MCF 10A (cell line): ENCODE measurements at regions of chr10 and their contacts with region 1.

Region 1: GRCh38 chr10:25113191-25114035 is 61.4 kb upstream of the GPR158 start:
- DNase-seq: peak; percentile 84
- H3K4me3 Mint-ChIP-seq: no peak overlapping the region
- H3K27ac Mint-ChIP-seq: no peak overlapping the region
- H3K4me1 Mint-ChIP-seq: no peaks in the 10 kb centered on the region
- H3K27me3 Mint-ChIP-seq: peaks cover 46% of the 10 kb centered on the region
- CTCF ChIP-seq: peak; percentile 66

Region 2: GRCh38 chr10:25101461-25102146 is 11.8 kb before region 1 on chr10:
- CTCF ChIA-PET with region 1: interaction called, 29 read pairs
- POLR2A ChIA-PET with region 1: interaction called, 5 read pairs
- intact Hi-C with region 1: no loop called
- DNase-seq: no peak
- H3K4me3 Mint-ChIP-seq: no peak overlapping the region
- H3K27ac Mint-ChIP-seq: no peak overlapping the region
- H3K4me1 Mint-ChIP-seq: no peaks in the 10 kb centered on the region
- H3K27me3 Mint-ChIP-seq: peaks cover 27% of the 10 kb centered on the region
- CTCF ChIP-seq: no peak

Region 3: DNA sequence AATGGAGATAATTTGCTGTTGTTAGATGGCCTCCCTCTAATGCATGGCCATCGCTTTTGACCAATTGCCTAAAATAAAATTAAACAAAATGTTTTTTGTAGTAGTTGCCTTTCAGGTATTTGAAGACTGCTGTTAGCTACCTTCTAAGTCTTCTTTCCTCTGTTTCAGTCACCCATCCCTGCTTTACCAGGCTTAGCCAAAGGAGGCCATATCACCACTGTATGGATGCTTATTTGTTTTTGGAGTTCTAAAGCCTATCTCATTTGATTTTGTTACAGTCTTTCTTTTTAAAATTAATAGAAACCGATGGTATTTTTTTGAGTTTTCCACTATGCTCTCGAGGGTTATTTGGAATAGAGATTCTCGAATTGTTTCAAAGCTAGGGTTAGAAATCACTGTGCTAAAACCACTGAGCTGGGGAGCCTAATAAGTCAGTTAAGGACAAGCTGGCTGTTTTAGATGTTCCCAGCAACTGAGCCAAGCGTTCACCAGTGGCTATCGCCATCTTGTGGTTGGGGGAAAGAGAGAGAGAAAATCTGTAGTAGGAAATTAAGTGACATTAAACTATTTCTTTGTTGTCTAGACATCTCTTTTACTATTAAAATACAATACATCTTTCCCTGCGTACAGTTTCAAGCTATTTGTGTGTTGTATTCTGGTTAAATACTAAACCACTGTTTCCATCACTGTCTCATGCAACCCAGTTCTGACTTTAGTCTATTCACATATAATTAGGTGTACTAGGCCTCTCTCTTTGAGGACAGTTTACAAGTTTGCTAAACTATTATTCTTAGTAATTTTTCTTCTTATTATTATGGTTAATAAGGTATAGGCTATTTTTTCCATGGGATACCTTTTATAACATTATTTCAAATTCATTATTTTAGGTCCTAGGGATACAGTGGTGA is 113.6 kb after region 1 on chr10:
- CTCF ChIA-PET with region 1: interaction called, 29 read pairs
- POLR2A ChIA-PET with region 1: no interaction called
- intact Hi-C with region 1: loop called (anchors 1 kb)
- DNase-seq: peak; percentile 65
- H3K4me3 Mint-ChIP-seq: no peak overlapping the region
- H3K27ac Mint-ChIP-seq: no peak overlapping the region
- H3K4me1 Mint-ChIP-seq: no peaks in the 10 kb centered on the region
- H3K27me3 Mint-ChIP-seq: peaks cover 24% of the 10 kb centered on the region
- CTCF ChIP-seq: peak; percentile 69

Region 4: DNA sequence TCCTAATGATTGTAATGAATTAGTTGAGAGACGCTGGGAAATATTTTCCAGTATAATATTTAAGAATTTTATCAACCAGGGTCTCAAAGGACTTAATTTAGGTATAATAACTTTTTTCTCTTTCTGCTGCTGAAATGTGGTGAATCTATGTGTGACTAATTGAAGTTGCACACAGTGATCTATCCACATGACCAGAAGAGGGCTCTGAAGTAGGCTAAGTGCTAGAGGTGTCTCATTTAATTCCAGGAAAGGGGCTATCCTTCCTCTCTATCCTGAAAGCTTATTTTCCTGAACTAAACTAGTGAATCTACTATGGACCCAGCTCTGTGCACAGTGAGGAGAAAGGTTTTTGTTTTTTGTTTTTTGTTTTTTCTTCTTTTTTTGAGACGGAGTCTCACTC is 526.2 kb after region 1 on chr10:
- CTCF ChIA-PET with region 1: no interaction called
- POLR2A ChIA-PET with region 1: no interaction called
- intact Hi-C with region 1: loop called (anchors 1 kb)
- DNase-seq: no peak
- H3K4me3 Mint-ChIP-seq: no peak overlapping the region
- H3K27ac Mint-ChIP-seq: no peak overlapping the region
- H3K4me1 Mint-ChIP-seq: no peaks in the 10 kb centered on the region
- H3K27me3 Mint-ChIP-seq: peaks cover 8% of the 10 kb centered on the region
- CTCF ChIP-seq: no peak

Region 5: DNA sequence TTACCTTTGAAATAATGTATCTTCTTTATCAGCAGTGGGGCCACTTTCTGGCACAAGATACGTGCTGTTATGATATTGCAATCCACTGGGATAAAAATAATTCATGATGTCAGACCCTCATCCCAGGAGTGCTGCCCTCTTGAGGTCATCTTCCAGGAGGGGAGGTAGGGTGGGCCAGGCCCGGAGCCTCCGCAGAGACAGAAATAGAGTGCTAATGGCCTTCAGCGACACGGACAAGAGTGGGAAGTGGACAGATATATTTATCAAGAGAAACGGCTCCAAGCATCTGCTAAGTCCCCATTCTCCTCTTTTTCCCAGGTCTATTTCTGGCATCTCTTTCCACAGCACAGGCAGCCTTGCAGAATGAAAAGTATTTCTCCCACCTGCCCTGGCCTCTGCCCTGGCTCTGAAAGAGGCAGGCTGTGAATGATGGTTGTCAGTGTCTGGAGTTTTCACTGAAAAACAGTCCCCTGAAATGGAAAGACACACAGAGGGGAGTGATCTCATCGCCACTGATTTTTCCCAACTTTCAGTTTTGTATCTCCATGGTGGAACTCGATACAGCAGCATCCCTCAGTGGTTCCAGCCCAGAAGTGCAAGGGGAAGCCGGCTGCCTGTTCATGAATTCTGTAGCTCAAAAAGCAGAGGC is 568.9 kb after region 1 on chr10:
- CTCF ChIA-PET with region 1: interaction called, 14 read pairs
- POLR2A ChIA-PET with region 1: no interaction called
- intact Hi-C with region 1: loop called (anchors 2 kb)
- DNase-seq: peak; percentile 25
- H3K4me3 Mint-ChIP-seq: peak overlapping the region; percentile 55
- H3K27ac Mint-ChIP-seq: no peak overlapping the region
- H3K4me1 Mint-ChIP-seq: peaks cover 11% of the 10 kb centered on the region
- H3K27me3 Mint-ChIP-seq: peaks cover 28% of the 10 kb centered on the region
- CTCF ChIP-seq: peak; percentile 36

Region 6: DNA sequence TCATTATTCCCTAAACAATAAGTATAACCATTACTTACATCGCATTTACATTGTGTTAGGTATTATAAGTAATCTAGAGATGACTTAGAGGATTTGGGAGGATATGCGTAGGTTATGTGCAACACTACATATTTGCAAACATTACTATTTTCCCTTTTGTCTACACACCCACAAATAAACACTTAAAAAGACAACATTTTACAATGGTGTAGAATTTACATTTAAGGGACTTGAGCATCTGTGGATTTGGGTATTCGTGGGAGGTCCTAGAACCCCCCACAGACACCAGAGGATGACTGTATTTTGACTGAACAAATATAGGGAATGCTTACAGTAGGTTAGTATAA is 600.5 kb after region 1 on chr10:
- CTCF ChIA-PET with region 1: interaction called, 16 read pairs
- POLR2A ChIA-PET with region 1: no interaction called
- intact Hi-C with region 1: loop called (anchors 2 kb)
- DNase-seq: no peak
- H3K4me3 Mint-ChIP-seq: no peak overlapping the region
- H3K27ac Mint-ChIP-seq: no peak overlapping the region
- H3K4me1 Mint-ChIP-seq: no peaks in the 10 kb centered on the region
- H3K27me3 Mint-ChIP-seq: peaks cover 29% of the 10 kb centered on the region
- CTCF ChIP-seq: no peak